ENCODE measurements at regions of chr4 and their contacts with region 1.

Region 1: GRCh38 chr4:70687821-70688794 is at the start of gene UTP3:
- DNase-seq: peak; percentile 93 to 95 (median 94)
- H3K4me3 ChIP-seq: peak within 1 kb of the TSS; percentile 70 to 99
- H3K4me3 Mint-ChIP-seq: peak within 1 kb of the TSS; percentile 92 to 100 (median 97)
- H3K27ac ChIP-seq: peak within 1 kb of the TSS; percentile 94
- H3K27ac Mint-ChIP-seq: peak within 1 kb of the TSS; percentile 95 to 100 (median 99)
- H3K4me1 ChIP-seq: peaks cover 37% of the 10 kb centered on the region
- H3K4me1 Mint-ChIP-seq: peaks cover 24 to 42% (median 35%) of the 10 kb centered on the region in 4 donors
- H3K27me3 ChIP-seq: no peaks in the 10 kb centered on the region
- H3K27me3 Mint-ChIP-seq: no peaks in the 10 kb centered on the region
- total RNA-seq, gene UTP3: 43.2 to 45.3 TPM

Region 2: DNA sequence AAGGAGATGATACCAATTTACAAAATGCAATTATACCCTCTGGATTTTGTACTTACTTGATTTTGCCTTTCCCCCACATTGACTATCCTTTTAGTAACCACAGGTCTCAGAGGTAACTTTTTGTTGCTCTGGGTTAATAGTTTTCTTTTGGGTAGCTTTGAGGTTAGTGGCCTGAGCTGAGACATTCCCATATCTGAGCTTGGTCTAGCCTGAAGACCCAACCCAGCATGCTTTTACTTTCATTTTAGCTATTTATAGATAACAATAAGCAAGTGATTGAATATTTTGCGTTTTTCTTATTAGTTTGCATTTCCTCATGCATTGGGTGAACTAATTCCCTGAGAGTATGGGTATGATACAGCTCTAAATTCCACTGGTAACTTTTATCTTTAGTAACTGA is 626.1 kb before region 1 on chr4:
- CTCF ChIA-PET with region 1: no interaction called
- POLR2A ChIA-PET with region 1: no interaction called
- intact Hi-C with region 1: no loop called
- DNase-seq: no peak
- H3K4me3 ChIP-seq: no peak overlapping the region
- H3K4me3 Mint-ChIP-seq: no peak overlapping the region
- H3K27ac ChIP-seq: no peak overlapping the region
- H3K27ac Mint-ChIP-seq: no peak overlapping the region
- H3K4me1 ChIP-seq: no peaks in the 10 kb centered on the region
- H3K4me1 Mint-ChIP-seq: no peaks in the 10 kb centered on the region
- H3K27me3 ChIP-seq: no peaks in the 10 kb centered on the region
- H3K27me3 Mint-ChIP-seq: no peaks in the 10 kb centered on the region

Region 3: GRCh38 chr4:70651864-70652506 is 36.1 kb before region 1 on chr4:
- CTCF ChIA-PET with region 1: interaction called, 4 read pairs
- POLR2A ChIA-PET with region 1: no interaction called
- intact Hi-C with region 1: loop called (anchors 1 kb)
- DNase-seq: peak in 4 of 5 donors; percentile 27 to 47 (median 32)
- H3K4me3 ChIP-seq: no peak overlapping the region
- H3K4me3 Mint-ChIP-seq: no peak overlapping the region
- H3K27ac ChIP-seq: no peak overlapping the region
- H3K27ac Mint-ChIP-seq: no peak overlapping the region
- H3K4me1 ChIP-seq: no peaks in the 10 kb centered on the region
- H3K4me1 Mint-ChIP-seq: peaks cover 0 to 4% (median 3%) of the 10 kb centered on the region in 4 donors
- H3K27me3 ChIP-seq: peaks cover 7% of the 10 kb centered on the region
- H3K27me3 Mint-ChIP-seq: peaks cover 2 to 5% of the 10 kb centered on the region in 2 donors

Region 4: GRCh38 chr4:70704331-70705145 is 16.4 kb after region 1 on chr4:
- CTCF ChIA-PET with region 1: interaction called, 134 read pairs
- POLR2A ChIA-PET with region 1: interaction called, 174 read pairs
- intact Hi-C with region 1: loop called (anchors 1 kb)
- DNase-seq: peak; percentile 43 to 73 (median 49)
- H3K4me3 ChIP-seq: peak overlapping the region; percentile 32 to 71
- H3K4me3 Mint-ChIP-seq: peak overlapping the region; percentile 87 to 96 (median 91)
- H3K27ac ChIP-seq: peak overlapping the region; percentile 79
- H3K27ac Mint-ChIP-seq: peak overlapping the region; percentile 89 to 97 (median 95)
- H3K4me1 ChIP-seq: peaks cover 28% of the 10 kb centered on the region
- H3K4me1 Mint-ChIP-seq: peaks cover 17 to 29% (median 21%) of the 10 kb centered on the region in 4 donors
- H3K27me3 ChIP-seq: no peaks in the 10 kb centered on the region
- H3K27me3 Mint-ChIP-seq: no peaks in the 10 kb centered on the region

Region 5: DNA sequence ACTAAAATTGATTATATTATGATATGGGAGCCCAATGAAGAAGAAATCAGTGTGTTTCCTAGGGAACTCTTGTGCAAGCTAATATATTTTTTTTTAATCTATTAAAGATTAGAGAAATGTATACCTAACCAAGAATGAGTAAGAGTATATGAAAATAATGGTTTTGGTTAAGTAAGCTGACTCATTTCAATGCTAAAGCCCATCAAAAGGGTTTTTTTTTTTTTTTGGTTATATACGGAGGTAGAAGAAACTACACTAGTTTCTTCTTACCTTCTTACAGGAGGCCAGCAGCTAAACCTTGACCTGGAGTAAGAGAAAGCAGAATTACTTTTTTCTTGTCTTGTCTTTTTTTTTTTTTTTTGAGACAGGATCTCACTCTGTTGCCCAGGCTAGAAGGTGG is 61.2 kb after region 1 on chr4:
- CTCF ChIA-PET with region 1: no interaction called
- POLR2A ChIA-PET with region 1: no interaction called
- intact Hi-C with region 1: no loop called
- DNase-seq: no peak
- H3K4me3 ChIP-seq: no peak overlapping the region
- H3K4me3 Mint-ChIP-seq: no peak overlapping the region
- H3K27ac ChIP-seq: no peak overlapping the region
- H3K27ac Mint-ChIP-seq: no peak overlapping the region
- H3K4me1 ChIP-seq: no peaks in the 10 kb centered on the region
- H3K4me1 Mint-ChIP-seq: peaks cover 7 to 11% (median 9%) of the 10 kb centered on the region in 4 donors
- H3K27me3 ChIP-seq: no peaks in the 10 kb centered on the region
- H3K27me3 Mint-ChIP-seq: no peaks in the 10 kb centered on the region

Region 6: DNA sequence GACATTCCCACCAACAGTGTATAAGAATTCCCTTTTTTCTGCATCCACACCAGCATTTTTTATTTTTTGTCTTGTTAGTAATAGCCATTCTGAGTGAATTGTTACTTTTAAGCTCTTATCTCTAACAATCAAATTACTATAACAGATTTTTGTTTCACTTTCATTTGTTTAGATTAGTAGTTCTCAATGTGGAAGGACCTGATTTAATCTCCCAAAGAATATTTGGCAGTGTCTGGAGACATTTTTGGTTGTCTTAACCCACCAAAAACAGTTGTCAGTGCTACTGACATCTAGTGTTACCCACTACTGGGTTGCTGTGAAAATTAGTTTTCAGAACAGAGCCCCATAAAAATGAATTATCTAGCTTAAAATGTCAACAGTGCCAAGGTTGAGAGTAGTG is 71.5 kb after region 1 on chr4:
- CTCF ChIA-PET with region 1: no interaction called
- POLR2A ChIA-PET with region 1: no interaction called
- intact Hi-C with region 1: no loop called
- DNase-seq: peak in 2 of 5 donors; percentile 7 to 21
- H3K4me3 ChIP-seq: no peak overlapping the region
- H3K4me3 Mint-ChIP-seq: peak overlapping the region; percentile 11 to 83 (median 64)
- H3K27ac ChIP-seq: no peak overlapping the region
- H3K27ac Mint-ChIP-seq: peak overlapping the region in 6 of 7 donors; percentile 7 to 86 (median 42)
- H3K4me1 ChIP-seq: peaks cover 17% of the 10 kb centered on the region
- H3K4me1 Mint-ChIP-seq: peaks cover 13 to 18% (median 16%) of the 10 kb centered on the region in 4 donors
- H3K27me3 ChIP-seq: no peaks in the 10 kb centered on the region
- H3K27me3 Mint-ChIP-seq: no peaks in the 10 kb centered on the region

Region 7: GRCh38 chr4:70801265-70801809 is 113.2 kb after region 1 on chr4:
- CTCF ChIA-PET with region 1: no interaction called
- POLR2A ChIA-PET with region 1: no interaction called
- intact Hi-C with region 1: no loop called
- DNase-seq: no peak
- H3K4me3 ChIP-seq: no peak overlapping the region
- H3K4me3 Mint-ChIP-seq: no peak overlapping the region
- H3K27ac ChIP-seq: no peak overlapping the region
- H3K27ac Mint-ChIP-seq: peak overlapping the region in 4 of 7 donors; percentile 39 to 59 (median 46)
- H3K4me1 ChIP-seq: no peaks in the 10 kb centered on the region
- H3K4me1 Mint-ChIP-seq: peaks cover 7 to 11% (median 10%) of the 10 kb centered on the region in 4 donors
- H3K27me3 ChIP-seq: no peaks in the 10 kb centered on the region
- H3K27me3 Mint-ChIP-seq: no peaks in the 10 kb centered on the region

Region 8: DNA sequence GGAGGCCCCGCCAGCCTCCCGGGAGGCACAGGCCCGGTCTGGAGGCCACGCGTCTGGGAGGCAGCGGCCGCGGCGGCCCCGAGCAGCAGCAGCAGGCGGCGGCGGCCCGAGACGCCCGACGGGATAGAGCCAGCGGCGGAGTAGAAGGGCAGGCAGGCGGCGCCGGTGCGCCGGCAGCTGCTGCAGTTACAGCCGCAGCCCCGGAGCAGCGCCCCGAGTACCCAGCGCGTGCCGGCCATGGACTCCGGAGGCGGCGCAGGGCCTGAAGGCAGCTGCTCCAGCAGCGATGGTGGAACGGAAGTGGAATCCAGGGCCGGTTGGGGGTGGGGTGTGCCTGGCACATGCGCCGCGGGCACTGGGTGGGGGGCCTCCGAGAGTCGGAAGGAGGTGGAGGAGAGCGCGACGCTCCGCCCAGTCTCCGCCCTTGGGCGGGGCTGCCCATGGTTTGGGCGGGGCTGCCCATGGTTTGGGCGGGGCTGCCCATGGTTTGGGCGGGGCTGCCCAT is 151.5 kb after region 1 on chr4 and contains the start of gene GRSF1:
- CTCF ChIA-PET with region 1: interaction called, 3 read pairs
- POLR2A ChIA-PET with region 1: interaction called, 30 read pairs
- intact Hi-C with region 1: loop called (anchors 1 kb)
- DNase-seq: peak; percentile 95 to 96 (median 95)
- H3K4me3 ChIP-seq: peak within 1 kb of the TSS; percentile 58 to 69
- H3K4me3 Mint-ChIP-seq: peak within 1 kb of the TSS; percentile 95 to 99 (median 98)
- H3K27ac ChIP-seq: peak within 1 kb of the TSS; percentile 77
- H3K27ac Mint-ChIP-seq: peak within 1 kb of the TSS; percentile 94 to 99 (median 97)
- H3K4me1 ChIP-seq: peaks cover 32% of the 10 kb centered on the region
- H3K4me1 Mint-ChIP-seq: peaks cover 16 to 39% (median 27%) of the 10 kb centered on the region in 4 donors
- H3K27me3 ChIP-seq: no peaks in the 10 kb centered on the region
- H3K27me3 Mint-ChIP-seq: no peaks in the 10 kb centered on the region
- total RNA-seq, gene GRSF1: 47.0 to 54.3 TPM

Region 9: DNA sequence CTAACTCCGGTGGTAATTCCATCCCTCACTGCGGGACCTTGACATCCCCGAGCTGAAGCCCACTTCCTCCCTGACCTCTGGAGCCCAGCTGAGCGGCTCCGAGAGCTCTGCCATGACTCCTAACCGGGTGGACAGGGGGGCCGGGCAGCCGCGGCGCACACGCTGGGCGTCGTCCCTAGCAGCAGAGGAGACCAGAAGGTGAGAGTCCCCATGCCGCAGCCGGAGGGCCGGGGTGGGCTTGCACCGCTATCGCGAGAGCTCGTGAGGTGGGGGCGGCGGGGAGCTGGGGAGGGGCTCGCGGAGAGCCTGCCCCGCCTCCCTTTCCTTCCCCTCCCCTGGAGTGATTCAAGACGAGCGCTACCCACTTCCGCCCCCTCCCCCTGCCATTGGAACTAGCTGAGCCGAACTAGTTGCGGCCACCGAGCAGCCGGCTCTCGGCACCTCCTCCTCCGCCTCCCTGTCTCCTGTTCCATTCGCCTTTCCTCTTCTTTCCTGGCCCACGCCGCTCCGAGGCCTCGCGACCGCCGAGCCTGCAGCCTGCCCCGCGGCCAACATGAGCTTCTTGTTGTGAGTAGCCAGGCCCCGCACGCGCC is 214.0 kb after region 1 on chr4 and contains the start of gene MOB1B:
- CTCF ChIA-PET with region 1: interaction called, 3 read pairs
- POLR2A ChIA-PET with region 1: interaction called, 5 read pairs
- intact Hi-C with region 1: loop called (anchors 1 kb)
- DNase-seq: peak; percentile 81 to 88 (median 82)
- H3K4me3 ChIP-seq: peak within 1 kb of the TSS; percentile 79 to 95
- H3K4me3 Mint-ChIP-seq: peak within 1 kb of the TSS; percentile 97 to 99 (median 98)
- H3K27ac ChIP-seq: peak within 1 kb of the TSS; percentile 71
- H3K27ac Mint-ChIP-seq: peak within 1 kb of the TSS; percentile 49 to 94 (median 92)
- H3K4me1 ChIP-seq: peaks cover 17% of the 10 kb centered on the region
- H3K4me1 Mint-ChIP-seq: peaks cover 17 to 41% (median 26%) of the 10 kb centered on the region in 4 donors
- H3K27me3 ChIP-seq: no peaks in the 10 kb centered on the region
- H3K27me3 Mint-ChIP-seq: peaks cover 0 to 1% of the 10 kb centered on the region in 2 donors
- total RNA-seq, gene MOB1B: 10.2 to 10.8 TPM